CD4-positive, alpha-beta memory T cell (primary cell): ENCODE measurements at regions of chr11 and their contacts with region 1.

Region 1: DNA sequence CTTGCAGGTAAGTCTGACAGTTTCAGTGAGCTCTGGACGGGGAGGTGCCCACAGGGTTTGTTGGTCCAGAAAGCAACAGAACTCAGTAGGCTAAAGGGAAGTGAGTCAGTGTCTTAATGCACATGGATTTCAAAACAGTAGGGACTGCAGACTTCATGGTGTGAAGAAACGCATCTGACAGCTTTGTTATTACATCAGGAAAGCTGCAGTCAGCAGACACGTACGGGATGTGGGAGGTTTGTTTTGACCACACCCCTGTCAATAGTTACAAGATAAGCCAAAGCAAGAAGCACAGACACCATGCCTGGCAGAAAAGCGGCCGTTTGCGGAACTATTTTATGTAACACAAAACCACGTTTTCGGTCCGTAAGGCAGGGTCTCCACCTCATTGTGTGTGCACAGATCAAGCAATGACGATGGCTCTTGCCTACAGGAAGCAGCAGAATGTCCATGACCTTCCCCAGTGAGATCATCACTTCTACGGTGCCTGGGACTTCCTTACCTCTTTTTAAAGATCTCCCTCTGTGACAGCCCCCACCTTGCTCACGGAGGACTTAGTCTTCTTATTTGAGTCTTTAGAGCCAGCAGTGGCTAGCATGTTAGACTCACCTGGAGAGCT is 58.2 kb upstream of the FTH1 start:
- DNase-seq: peak; percentile 90 to 98 (median 95)
- H3K4me3 ChIP-seq: peak overlapping the region in 1 of 2 donors; percentile 35
- H3K4me3 Mint-ChIP-seq: peak overlapping the region; percentile 67 to 91 (median 78)
- H3K27ac ChIP-seq: peak overlapping the region; percentile 86
- H3K27ac Mint-ChIP-seq: peak overlapping the region; percentile 94 to 100 (median 100)
- H3K4me1 ChIP-seq: peaks cover 24% of the 10 kb centered on the region
- H3K4me1 Mint-ChIP-seq: peaks cover 13 to 30% (median 23%) of the 10 kb centered on the region in 4 donors
- H3K27me3 ChIP-seq: no peaks in the 10 kb centered on the region
- H3K27me3 Mint-ChIP-seq: no peaks in the 10 kb centered on the region

Region 2: GRCh38 chr11:62013591-62014476 is 11.8 kb before region 1 on chr11:
- CTCF ChIA-PET with region 1: interaction called, 3 read pairs
- POLR2A ChIA-PET with region 1: interaction called, 10 read pairs
- intact Hi-C with region 1: no loop called
- DNase-seq: no peak
- H3K4me3 ChIP-seq: no peak overlapping the region
- H3K4me3 Mint-ChIP-seq: no peak overlapping the region
- H3K27ac ChIP-seq: no peak overlapping the region
- H3K27ac Mint-ChIP-seq: peak overlapping the region in 5 of 7 donors; percentile 19 to 70 (median 23)
- H3K4me1 ChIP-seq: no peaks in the 10 kb centered on the region
- H3K4me1 Mint-ChIP-seq: no peaks in the 10 kb centered on the region
- H3K27me3 ChIP-seq: no peaks in the 10 kb centered on the region
- H3K27me3 Mint-ChIP-seq: peaks cover 0 to 4% of the 10 kb centered on the region in 2 donors

Region 3: GRCh38 chr11:62054484-62055121 is 29.0 kb after region 1 on chr11:
- CTCF ChIA-PET with region 1: no interaction called
- POLR2A ChIA-PET with region 1: interaction called, 12 read pairs
- intact Hi-C with region 1: no loop called
- DNase-seq: peak; percentile 11 to 53 (median 36)
- H3K4me3 ChIP-seq: no peak overlapping the region
- H3K4me3 Mint-ChIP-seq: no peak overlapping the region
- H3K27ac ChIP-seq: no peak overlapping the region
- H3K27ac Mint-ChIP-seq: peak overlapping the region in 1 of 7 donors; percentile 29
- H3K4me1 ChIP-seq: no peaks in the 10 kb centered on the region
- H3K4me1 Mint-ChIP-seq: no peaks in the 10 kb centered on the region
- H3K27me3 ChIP-seq: no peaks in the 10 kb centered on the region
- H3K27me3 Mint-ChIP-seq: peaks cover 0 to 3% of the 10 kb centered on the region in 2 donors